SK-N-SH (cell line): ENCODE measurements at regions of chr14 and their contacts with region 1.

Region 1: GRCh38 chr14:52051871-52052270 is 17.0 kb downstream of the NID2 start:
- DNase-seq: no peak
- H3K4me3 ChIP-seq: no peak overlapping the region
- H3K27ac ChIP-seq: peak overlapping the region; percentile 23 to 94; a peak in 3 of 4 replicates
- H3K4me1 ChIP-seq: peaks cover 3 to 32% of the 10 kb centered on the region in 2 experiments; a peak in 3 of 4 replicates
- H3K27me3 ChIP-seq: no peaks in the 10 kb centered on the region
- CTCF ChIP-seq: no peak
- EP300 ChIP-seq: no peak
- RAD21 ChIP-seq: no peak

Region 2: GRCh38 chr14:51860164-51860824 is 191.6 kb before region 1 on chr14 and contains the start of gene GNG2:
- CTCF ChIA-PET with region 1: no interaction called
- POLR2A ChIA-PET with region 1: no interaction called
- DNase-seq: peak; percentile 75
- H3K4me3 ChIP-seq: peak within 1 kb of the TSS; percentile 70 to 82
- H3K27ac ChIP-seq: peak within 1 kb of the TSS; percentile 75 to 92
- H3K4me1 ChIP-seq: peaks cover 20 to 22% of the 10 kb centered on the region in 2 experiments
- H3K27me3 ChIP-seq: no peaks in the 10 kb centered on the region
- CTCF ChIP-seq: no peak
- EP300 ChIP-seq: peak in 1 of 2 experiments; percentile 22; a peak in 2 of 4 replicates
- RAD21 ChIP-seq: no peak; the same call in 1 of the 2 replicates
- polyA plus RNA-seq, gene GNG2: 17.8 and 19.1 TPM in 2 replicates

Region 3: GRCh38 chr14:52131640-52132320 is 79.9 kb after region 1 on chr14:
- CTCF ChIA-PET with region 1: interaction called, 10 read pairs
- POLR2A ChIA-PET with region 1: no interaction called
- DNase-seq: peak; percentile 89
- H3K4me3 ChIP-seq: no peak overlapping the region
- H3K27ac ChIP-seq: no peak overlapping the region
- H3K4me1 ChIP-seq: peaks cover 0 to 5% of the 10 kb centered on the region in 2 experiments; a peak in 3 of 4 replicates
- H3K27me3 ChIP-seq: no peaks in the 10 kb centered on the region
- CTCF ChIP-seq: peak; percentile 86
- EP300 ChIP-seq: no peak
- RAD21 ChIP-seq: peak; percentile 92